Activated CD8-positive, alpha-beta memory T cell treated with anti-CD3 and anti-CD28 coated beads, Interleukin-2, amount 10 ng/mL, durations not matched to agents 7 days and 5 days (primary cell): ENCODE measurements at regions of chr12 and their contacts with region 1.

Region 1: DNA sequence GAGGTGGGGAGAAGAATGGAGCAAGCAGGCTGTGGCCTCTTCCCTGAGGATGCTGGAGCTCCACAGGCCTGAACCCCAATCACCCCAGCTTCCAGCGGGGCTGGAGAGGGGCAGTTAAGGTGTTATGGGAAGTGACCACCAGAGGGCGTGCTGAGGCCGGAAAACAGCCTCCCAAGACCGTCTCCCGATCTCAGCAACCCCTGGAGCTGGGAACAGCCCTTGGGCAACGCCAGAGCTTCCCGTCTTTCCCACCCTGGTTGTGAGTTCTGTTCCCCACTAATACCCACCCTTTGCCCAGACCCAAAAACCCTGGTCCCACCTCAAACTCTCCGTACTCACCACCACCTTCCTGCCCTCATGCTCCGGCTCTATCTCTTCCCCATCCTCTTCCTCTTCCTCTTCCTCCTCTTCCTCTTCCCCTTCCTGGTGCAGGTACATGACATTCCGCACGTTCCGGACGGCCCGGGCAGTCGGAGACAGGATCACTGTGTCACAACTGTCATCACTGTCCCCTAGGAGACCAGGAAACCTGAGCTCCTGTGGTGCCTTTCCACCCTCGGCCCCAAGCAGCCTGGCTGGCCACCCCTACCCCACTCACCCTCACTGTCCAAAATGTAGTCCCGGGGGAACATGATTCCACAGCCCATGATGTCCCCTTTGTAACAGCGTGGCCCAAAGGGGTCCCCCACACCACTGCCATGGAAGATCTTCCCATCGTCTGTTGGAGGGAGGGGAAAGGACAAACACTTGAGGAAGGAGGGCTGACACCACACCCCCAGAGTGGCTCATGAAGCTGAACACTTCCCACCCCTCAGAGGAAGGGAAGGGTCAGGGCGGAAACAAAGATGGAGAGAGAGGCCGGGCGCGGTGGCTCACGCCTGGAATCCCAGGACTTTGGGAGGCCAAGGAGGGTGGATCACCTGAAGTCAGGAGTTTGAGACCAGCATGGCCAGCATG is 12.9 kb downstream of the SPRYD3 start:
- DNase-seq: peak; percentile 72
- ATAC-seq: peak; percentile 80
- H3K4me3 Mint-ChIP-seq: no peak overlapping the region
- H3K27ac Mint-ChIP-seq: no peak overlapping the region
- H3K4me1 Mint-ChIP-seq: peaks cover 5% of the 10 kb centered on the region
- H3K27me3 Mint-ChIP-seq: no peaks in the 10 kb centered on the region

Region 2: GRCh38 chr12:52813885-52814711 is 252.2 kb before region 1 on chr12 and contains the start of gene KRT4:
- CTCF ChIA-PET with region 1: no interaction called
- DNase-seq: no peak
- ATAC-seq: no peak
- H3K4me3 Mint-ChIP-seq: no peak within 1 kb of the TSS
- H3K27ac Mint-ChIP-seq: no peak within 1 kb of the TSS
- H3K4me1 Mint-ChIP-seq: no peaks in the 10 kb centered on the region
- H3K27me3 Mint-ChIP-seq: peaks cover 10% of the 10 kb centered on the region
- total RNA-seq, gene KRT4: not detected

Region 3: GRCh38 chr12:53054112-53054833 is 12.0 kb before region 1 on chr12:
- CTCF ChIA-PET with region 1: interaction called, 153 read pairs
- DNase-seq: peak; percentile 95
- ATAC-seq: peak; percentile 94
- H3K4me3 Mint-ChIP-seq: peak overlapping the region; percentile 92
- H3K27ac Mint-ChIP-seq: peak overlapping the region; percentile 86
- H3K4me1 Mint-ChIP-seq: peaks cover 24% of the 10 kb centered on the region
- H3K27me3 Mint-ChIP-seq: no peaks in the 10 kb centered on the region

Region 4: GRCh38 chr12:53079226-53080117 is 13.2 kb after region 1 on chr12 and contains the start of gene SPRYD3:
- CTCF ChIA-PET with region 1: interaction called, 109 read pairs
- DNase-seq: peak; percentile 97
- ATAC-seq: peak; percentile 97
- H3K4me3 Mint-ChIP-seq: peak within 1 kb of the TSS; percentile 80
- H3K27ac Mint-ChIP-seq: peak within 1 kb of the TSS; percentile 88
- H3K4me1 Mint-ChIP-seq: peaks cover 31% of the 10 kb centered on the region
- H3K27me3 Mint-ChIP-seq: no peaks in the 10 kb centered on the region
- total RNA-seq, gene SPRYD3: 27.8 to 29.7 TPM

Region 5: DNA sequence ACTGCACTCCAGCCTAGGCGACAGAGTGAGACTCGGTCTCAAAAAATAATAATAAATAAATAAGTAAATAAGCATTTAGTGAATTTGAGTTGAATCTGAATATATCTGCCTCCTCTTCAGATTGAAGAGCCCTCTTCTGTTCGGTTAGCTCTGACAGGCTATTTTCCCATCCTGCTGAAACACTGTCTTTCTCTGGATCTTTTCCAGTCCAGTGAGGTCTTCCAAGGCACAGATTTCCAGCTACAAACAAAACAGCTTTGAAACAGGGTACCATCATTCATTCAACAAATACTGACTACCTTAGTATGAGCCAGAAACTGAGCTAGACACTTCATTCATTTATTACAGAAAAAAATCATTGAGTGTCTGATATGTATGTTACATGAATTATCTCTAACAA is 20.1 kb after region 1 on chr12:
- CTCF ChIA-PET with region 1: interaction called, 109 read pairs
- DNase-seq: no peak
- ATAC-seq: no peak
- H3K4me3 Mint-ChIP-seq: no peak overlapping the region
- H3K27ac Mint-ChIP-seq: no peak overlapping the region
- H3K4me1 Mint-ChIP-seq: peaks cover 8% of the 10 kb centered on the region
- H3K27me3 Mint-ChIP-seq: peaks cover 21% of the 10 kb centered on the region

Region 6: DNA sequence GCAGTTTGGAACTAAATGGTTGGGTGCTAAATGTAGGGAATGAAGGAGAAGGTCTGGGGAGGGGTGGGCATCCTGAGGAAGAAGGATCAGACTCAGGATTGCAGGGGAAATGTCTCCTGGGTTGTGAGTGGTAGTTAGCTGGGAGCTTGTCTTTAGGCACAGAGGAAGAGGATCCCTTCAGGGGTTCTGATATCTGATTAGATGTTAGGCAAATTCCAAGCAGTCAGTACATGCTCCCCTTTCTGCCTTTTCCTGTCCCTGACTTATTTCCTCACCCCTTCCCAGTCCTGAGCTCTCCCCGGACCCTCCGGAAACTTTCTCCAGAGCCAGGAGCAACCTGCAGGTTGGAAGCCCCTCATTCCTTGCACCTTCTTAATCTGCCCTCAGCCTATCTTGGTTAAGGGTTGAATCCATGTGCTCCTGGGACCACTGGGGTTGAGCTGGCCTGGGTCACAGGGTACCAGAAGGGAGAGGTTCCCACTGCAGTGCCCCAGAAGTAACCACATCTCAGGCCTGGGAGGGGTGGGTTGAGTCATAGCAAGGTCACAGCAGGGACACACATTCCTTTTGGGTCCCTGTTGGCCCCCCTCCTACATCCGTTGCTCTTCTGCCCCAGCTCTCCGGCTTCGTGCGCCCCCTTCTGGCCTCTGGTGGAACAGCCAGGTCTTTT is 32.9 kb after region 1 on chr12:
- CTCF ChIA-PET with region 1: interaction called, 298 read pairs
- DNase-seq: peak; percentile 93
- ATAC-seq: peak; percentile 47
- H3K4me3 Mint-ChIP-seq: peak overlapping the region; percentile 72
- H3K27ac Mint-ChIP-seq: peak overlapping the region; percentile 80
- H3K4me1 Mint-ChIP-seq: peaks cover 56% of the 10 kb centered on the region
- H3K27me3 Mint-ChIP-seq: peaks cover 4% of the 10 kb centered on the region

Region 7: GRCh38 chr12:53180220-53180930 is 114.1 kb after region 1 on chr12 and contains the starts of genes CSAD and ZNF740:
- CTCF ChIA-PET with region 1: interaction called, 10 read pairs
- DNase-seq: peak; percentile 99
- ATAC-seq: peak; percentile 98
- H3K4me3 Mint-ChIP-seq: peak within 1 kb of the TSS; percentile 85
- H3K27ac Mint-ChIP-seq: peak within 1 kb of the TSS; percentile 98
- H3K4me1 Mint-ChIP-seq: peaks cover 50% of the 10 kb centered on the region
- H3K27me3 Mint-ChIP-seq: no peaks in the 10 kb centered on the region
- total RNA-seq, gene CSAD: 19.6 to 28.1 TPM
- total RNA-seq, gene ZNF740: 35.8 to 47.0 TPM

Region 8: DNA sequence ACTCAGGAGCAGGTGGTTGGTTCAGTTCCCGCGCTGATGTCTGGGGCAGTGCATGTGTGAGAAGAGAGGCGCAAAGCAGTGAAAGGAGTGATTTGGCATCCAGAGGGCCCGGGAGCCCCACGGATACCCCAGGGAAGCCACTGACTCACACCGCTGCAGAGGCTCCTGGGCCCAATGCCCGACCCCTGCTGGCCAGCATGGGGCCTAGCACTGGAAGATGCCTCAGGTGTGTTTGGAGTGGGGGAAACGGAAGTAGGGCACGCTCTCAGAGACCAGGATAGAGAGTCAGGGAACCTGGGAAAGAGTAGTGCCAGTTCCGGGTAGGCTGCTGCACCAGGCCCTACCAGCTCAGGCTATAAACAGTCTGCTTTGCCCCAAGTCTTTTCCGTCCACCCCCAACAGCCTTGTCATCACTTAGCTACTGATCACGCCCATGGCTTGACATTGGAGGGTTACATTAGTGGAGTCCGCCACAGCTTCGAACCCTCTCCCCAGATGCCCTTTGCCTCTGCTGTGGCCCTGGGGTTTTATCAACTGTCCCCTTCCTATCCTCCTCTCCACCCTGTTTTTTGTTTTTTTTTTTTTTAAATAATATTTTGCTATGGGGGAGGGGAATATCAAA is 124.0 kb after region 1 on chr12:
- CTCF ChIA-PET with region 1: interaction called, 11 read pairs
- DNase-seq: peak; percentile 59
- ATAC-seq: peak; percentile 79
- H3K4me3 Mint-ChIP-seq: no peak overlapping the region
- H3K27ac Mint-ChIP-seq: no peak overlapping the region
- H3K4me1 Mint-ChIP-seq: peaks cover 21% of the 10 kb centered on the region
- H3K27me3 Mint-ChIP-seq: no peaks in the 10 kb centered on the region